ENCODE measurements at regions of chr1 and their contacts with region 1.

Region 1: GRCh38 chr1:111203681-111204200 is 3.3 kb upstream of the DENND2D start:
- DNase-seq: peak; percentile 83
- CTCF ChIP-seq: no peak

Region 2: GRCh38 chr1:111214074-111214801 is 10.5 kb after region 1 on chr1:
- CTCF ChIA-PET with region 1: interaction called, 158 read pairs
- POLR2A ChIA-PET with region 1: interaction called, 12 read pairs
- DNase-seq: no peak
- CTCF ChIP-seq: no peak

Region 3: DNA sequence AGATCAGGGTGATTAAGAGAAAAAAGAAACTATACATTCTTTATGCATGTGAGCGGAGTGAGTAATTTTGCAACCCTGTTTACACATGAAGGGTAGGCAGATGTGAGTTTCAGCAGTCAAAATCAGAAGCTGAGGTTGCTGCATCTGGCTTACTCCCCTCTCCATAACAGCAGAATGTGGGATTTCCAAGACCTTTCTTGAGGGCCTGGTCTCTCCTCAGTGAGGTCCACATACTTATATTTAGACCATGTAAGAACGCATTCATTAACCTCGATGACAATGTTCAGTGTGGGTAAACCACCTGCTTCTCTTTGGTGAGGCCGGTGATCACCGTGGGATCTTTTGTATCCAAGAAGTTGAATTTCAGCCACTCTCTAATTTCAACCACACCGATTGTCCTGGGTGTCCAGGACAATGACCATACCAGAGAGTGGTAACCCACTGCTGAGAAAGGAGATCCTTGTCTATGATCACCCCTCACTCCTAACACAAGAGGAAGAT is 397.2 kb after region 1 on chr1:
- CTCF ChIA-PET with region 1: no interaction called
- POLR2A ChIA-PET with region 1: no interaction called
- DNase-seq: peak; percentile 57
- CTCF ChIP-seq: no peak

Measured in GM10248 (cell line).